Endothelial cell of umbilical vein (primary cell): ENCODE measurements at regions of chr6 and their contacts with region 1.

Region 1: DNA sequence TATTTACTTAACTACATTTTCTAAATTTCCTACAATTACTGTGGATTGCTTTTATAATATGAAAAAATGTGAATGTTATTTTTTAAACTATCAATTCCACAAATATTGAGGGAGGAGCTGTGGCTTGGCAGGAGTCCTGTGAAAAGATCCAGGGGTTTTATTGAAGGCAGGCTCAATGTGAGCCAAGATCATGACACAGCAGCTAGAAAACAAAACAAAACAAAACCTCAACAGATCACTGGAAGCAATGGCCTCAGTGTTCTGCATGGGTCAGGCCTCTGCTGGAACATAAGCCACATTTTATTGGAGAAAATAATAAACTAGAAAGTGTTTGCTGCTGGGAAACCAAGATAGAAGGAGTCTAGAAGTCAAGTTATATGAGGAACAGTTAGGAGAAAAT is 19.4 kb upstream of the RCAN2 start:
- DNase-seq: no peak
- H3K4me3 ChIP-seq: no peak overlapping the region
- H3K27ac ChIP-seq: no peak overlapping the region
- H3K4me1 ChIP-seq: no peaks in the 10 kb centered on the region
- H3K27me3 ChIP-seq: peaks cover 2 to 4% of the 10 kb centered on the region in 2 experiments
- CTCF ChIP-seq: no peak
- POLR2A ChIP-seq: no peak

Region 2: DNA sequence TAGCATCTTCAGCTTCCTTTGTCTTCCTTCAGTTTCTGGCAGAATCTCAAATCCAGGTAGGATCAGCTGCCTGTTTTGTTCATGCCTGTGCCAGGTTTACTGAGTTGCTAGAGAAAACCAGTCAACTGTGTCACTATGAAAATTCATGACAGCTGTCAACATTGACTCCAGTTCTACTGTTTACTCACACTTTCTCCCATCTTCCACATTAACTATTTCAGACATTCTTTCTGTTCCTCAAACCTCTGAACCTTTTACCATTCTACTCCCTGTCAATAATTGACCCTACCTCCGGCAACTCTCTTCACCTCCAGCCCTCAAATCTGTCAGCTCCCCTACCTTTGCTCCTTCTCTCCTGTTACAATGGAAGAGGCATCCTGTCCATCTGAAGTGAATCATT is 372.4 kb before region 1 on chr6:
- CTCF ChIA-PET with region 1: no interaction called
- POLR2A ChIA-PET with region 1: no interaction called
- dilution Hi-C with region 1: no loop called
- intact Hi-C with region 1: no loop called
- DNase-seq: no peak
- H3K4me3 ChIP-seq: no peak overlapping the region
- H3K27ac ChIP-seq: no peak overlapping the region
- H3K4me1 ChIP-seq: no peaks in the 10 kb centered on the region
- H3K27me3 ChIP-seq: peaks cover 0 to 2% of the 10 kb centered on the region in 2 experiments
- CTCF ChIP-seq: no peak
- POLR2A ChIP-seq: no peak

Region 3: DNA sequence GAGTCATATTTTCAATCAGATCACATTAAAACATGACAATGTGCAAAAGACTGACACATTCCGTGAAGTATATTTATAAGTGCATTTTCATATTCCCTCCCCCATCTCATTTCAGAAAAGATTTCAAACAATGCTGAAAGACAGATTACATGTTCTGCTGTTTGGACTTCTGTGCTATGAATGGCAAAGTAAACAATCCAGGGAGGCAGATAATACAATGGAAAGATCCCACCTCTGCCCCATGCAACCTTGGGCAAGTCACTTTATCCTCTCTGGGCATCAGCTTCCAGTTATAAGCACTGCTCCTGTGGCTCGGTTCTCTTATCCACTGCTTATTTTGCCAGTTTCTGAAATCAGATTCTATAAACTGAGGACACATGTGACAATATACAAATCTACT is 129.6 kb before region 1 on chr6:
- CTCF ChIA-PET with region 1: no interaction called
- POLR2A ChIA-PET with region 1: interaction called, 11 read pairs
- dilution Hi-C with region 1: no loop called
- intact Hi-C with region 1: no loop called
- DNase-seq: no peak
- H3K4me3 ChIP-seq: no peak overlapping the region
- H3K27ac ChIP-seq: no peak overlapping the region
- H3K4me1 ChIP-seq: no peaks in the 10 kb centered on the region
- H3K27me3 ChIP-seq: peaks cover 0 to 7% of the 10 kb centered on the region in 2 experiments
- CTCF ChIP-seq: no peak
- POLR2A ChIP-seq: no peak